Dendritic cell treated with granulocyte-macrophage colony-stimulating factor and Interleukin-4, amounts not matched to agents 40 ng/mL and 50 ng/mL, for 4 days (primary cell): ENCODE measurements at regions of chr12 and their contacts with region 1.

Region 1: DNA sequence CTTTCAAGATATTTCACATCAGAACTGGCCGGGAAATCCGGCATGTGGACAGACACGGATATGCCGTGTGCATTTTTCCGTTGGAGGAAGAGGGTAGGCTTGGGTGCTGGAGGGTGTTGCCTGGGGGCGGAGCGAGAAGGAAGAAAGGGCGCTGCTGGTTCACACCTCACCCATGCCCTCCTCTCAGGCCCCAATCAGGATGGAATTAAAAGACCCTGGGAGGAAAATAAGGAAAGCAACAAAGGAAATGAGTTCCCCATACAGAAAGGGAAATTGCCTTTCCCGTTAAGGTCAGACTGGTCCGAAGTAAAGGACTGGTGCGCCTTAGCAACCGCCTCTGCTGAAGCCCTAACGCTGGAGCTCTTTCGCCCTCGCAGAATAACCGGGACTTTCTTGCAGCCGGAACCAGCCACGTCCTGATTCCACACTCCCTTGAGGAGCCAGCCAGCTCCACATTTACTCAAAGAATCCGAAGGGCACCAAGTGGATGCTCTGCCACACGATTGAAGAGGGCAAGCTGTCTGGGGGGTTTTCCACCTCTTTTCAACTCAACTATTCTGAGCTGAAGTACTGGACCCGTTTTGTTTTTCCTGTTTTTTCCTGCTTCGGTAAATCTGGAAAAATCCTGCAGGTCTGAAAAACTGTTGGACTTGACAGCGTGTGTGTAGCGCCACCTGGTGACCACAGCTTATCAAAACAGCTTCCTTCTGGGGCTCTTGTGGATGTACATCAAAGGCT is 37.7 kb upstream of the BCL2L14 start:
- H3K4me3 Mint-ChIP-seq: peak overlapping the region; percentile 66
- H3K27ac Mint-ChIP-seq: peak overlapping the region; percentile 84
- H3K4me1 Mint-ChIP-seq: peaks cover 52% of the 10 kb centered on the region
- H3K27me3 Mint-ChIP-seq: no peaks in the 10 kb centered on the region

Region 2: DNA sequence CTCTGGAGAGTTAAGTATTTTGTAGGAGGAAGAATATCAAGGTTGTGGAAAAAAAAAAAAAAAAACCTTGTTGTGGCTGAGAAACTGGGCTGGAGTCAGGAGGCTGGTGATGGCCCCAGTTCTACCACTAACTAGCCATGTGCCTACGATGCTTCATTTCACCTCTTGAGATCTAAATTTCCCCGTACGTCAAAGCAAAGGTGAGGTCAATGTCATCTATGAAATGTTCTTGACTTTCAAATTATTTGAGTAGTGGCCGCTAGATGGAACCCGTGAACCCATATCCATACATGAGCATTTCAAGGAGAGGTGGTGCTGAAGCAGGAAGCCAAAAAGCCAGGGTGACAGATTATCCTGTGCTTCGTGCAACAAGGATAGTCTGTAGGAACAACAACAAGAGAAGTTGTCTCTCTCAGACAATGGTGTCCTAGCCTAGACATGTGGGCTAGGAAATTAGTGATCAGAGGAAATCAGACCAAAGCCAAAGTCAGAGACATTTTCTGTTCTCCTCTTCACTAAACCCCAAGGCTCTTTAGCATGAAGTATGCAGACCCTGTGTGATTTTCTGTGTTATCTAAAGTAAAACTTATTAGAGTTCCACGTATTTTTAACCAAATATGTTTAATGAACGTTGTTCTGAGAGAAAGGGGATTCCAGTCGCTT is 479.0 kb before region 1 on chr12:
- intact Hi-C with region 1: loop called (anchors 1 kb)
- H3K4me3 Mint-ChIP-seq: no peak overlapping the region
- H3K27ac Mint-ChIP-seq: no peak overlapping the region
- H3K4me1 Mint-ChIP-seq: peaks cover 43% of the 10 kb centered on the region
- H3K27me3 Mint-ChIP-seq: no peaks in the 10 kb centered on the region

Region 3: DNA sequence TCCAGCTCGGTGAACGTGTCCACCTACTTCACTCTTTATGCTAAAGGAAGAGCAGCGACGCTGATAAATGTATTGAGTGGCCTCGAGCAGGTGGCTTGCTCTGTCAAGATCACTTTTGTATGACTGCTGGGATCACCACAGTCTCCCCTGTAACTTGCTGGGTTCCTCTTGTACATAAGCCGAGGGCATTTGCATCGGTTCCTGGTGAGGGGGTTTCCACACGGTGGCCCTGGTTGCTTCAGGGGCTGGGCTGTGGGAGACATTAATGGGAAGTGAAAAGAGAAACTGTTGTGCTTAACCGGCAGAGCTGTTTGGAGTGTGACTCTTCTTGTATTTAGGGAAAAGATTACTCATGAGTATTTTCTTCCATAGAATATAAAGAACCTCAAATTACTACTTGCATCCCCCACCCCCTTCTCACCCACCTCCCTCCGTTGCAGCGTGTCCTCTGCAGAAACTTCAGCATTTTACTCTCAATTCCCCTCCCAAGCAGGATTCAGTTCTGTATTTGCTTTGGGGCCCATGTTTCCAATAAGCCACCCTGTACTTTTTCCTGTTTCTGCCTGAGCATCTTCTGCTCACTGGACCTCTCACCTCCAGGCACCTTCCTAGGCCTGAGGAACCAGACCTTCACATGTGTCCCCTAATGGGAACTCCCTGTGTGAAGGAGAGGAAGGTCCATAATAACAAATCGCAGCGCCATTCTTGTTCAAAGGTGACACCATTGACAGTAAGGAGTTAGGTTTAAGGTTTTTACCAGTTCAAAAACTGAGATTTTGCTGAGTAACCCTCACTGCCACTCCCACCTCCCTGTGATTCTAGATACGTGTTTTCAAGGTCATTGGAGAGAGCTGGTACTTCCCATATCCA is 196.5 kb before region 1 on chr12:
- intact Hi-C with region 1: loop called (anchors 5 kb)
- H3K4me3 Mint-ChIP-seq: peak overlapping the region; percentile 42
- H3K27ac Mint-ChIP-seq: peak overlapping the region; percentile 99
- H3K4me1 Mint-ChIP-seq: peaks cover 90% of the 10 kb centered on the region
- H3K27me3 Mint-ChIP-seq: no peaks in the 10 kb centered on the region